Posterior vena cava (tissue), 2 donors: ENCODE measurements at regions of chr11 and their contacts with region 1.

Region 1: DNA sequence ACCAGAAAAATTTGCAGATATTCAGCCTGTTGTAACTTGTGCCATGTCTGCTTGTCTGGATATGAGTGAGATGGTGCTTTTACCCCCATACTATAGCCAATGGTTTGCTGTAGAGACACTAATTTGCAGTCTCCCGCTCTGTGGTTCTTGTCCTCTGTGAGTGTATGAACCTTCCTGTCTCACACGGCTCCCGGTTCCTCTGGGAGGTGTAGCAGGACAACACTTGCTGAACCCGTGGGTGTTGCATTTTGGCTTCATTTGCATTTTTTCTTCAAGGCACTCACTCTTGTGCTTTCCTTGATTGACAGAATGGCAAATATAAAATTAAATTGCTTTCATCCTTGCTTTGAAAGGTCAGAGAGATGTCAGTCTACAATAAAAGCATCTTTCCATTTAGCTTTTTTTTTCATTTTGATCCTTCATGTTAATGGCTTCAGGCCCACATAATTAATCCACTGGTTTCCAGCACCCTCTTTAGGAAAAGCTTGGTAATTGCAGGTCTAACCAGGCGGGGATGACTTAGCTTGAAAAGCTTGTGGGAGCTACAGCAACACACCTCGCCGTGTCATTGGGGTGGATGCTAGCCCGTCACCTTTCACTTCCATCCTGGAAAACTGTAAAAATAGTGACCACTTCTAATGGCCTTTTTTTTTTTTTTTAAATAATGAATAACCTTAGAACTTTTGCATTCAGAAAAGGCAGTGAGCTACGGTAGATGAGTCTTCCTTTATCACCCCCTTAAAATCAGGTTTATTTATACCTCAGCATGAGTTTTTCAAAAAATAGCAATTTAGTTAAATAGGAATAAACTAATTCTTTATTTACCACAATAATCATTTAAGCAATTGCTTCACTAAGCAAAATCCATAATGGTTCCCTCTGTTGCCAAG is 27.4 kb upstream of the ST14 start:
- DNase-seq: no peak

Region 2: DNA sequence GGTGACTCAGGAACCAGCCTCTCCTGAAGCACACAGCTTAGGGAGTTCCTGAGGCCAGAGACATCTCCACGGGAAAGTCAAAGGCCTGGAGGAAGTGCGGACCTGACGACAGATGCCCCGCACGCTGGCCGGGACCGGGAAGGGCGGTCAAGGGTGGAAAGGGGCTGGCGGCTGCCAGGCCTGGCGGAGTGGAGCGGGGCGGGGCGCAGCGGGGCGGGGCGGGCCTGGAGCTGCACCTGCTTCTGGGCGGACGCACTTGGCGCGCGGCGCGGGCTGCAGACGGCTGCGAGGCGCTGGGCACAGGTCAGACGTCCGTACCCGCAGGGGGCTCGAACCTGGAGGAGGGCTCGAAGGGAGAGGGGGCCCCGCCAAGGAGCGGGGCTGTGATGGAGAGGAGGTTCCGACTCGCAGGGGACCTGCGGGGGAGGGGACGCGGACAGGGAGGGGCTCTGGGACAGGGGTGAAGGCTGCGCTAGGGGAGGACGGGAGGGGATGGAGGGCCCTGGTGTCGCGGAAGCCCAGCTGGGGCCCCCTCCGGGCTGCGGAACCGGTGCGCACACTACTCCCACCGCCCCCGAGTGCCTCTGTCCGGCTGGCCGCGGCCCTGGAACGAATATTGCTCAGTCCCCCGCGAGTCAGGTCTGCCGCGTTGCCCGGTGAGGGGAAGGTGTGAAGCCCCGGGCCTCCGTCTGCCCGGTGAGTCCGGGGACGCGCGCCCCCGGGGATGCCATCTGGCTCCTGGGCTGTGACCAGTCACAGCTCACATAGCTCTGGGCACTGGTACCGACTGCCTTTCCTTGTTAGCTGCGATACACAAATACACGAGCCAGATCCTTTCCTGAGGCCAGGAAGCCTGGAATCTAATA is 316.4 kb before region 1 on chr11 and contains the start of gene TMEM45B:
- intact Hi-C with region 1: no loop called
- DNase-seq: no peak
- total RNA-seq, gene TMEM45B: not detected

Region 3: GRCh38 chr11:129922674-129923073 is 209.5 kb before region 1 on chr11:
- intact Hi-C with region 1: loop called (anchors 5 kb)
- DNase-seq: no peak

Region 4: DNA sequence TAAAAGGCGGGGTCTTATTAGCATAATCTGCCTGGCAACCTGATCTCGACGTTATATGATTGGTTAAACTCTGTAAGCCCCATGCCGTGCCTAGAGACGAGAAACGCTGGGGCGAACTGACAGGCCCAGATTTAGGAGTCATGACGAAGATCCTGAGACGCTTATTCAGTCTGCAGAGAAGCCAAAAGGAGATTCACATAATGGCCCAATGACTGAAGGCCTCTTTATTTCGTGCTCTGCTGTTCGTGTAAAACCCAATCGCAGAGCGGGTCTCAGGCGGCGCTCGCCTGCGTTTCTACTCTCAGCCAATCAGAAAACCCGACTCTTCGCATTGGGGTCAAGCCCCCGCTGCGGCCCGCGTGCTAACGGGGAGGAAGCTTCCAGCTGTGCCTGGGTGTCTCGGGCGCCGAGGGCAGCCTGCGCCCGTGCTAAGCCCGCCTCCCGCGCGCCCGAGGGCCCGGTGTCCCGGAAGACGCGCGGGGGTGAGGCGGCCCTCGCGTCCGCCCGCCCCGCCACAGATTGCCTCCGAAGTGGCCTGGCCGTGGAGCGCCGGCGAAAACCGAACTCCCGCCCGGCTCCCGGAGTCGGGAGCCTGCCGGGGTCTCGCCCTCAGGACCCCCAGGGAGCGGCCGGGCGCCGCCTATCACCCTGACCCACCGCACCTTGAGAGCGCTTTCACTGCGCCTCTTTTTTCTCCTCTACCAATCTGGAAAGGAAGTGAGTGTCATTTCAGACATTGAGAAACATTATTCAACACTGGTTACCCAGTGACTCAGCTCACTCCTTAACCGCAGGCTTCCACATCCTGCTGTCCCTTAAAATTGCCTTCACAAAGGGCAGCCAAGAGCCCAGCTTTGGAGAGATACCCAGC is 129.1 kb before region 1 on chr11:
- intact Hi-C with region 1: loop called in 1 of 2 experiments (anchors 5 kb)
- DNase-seq: peak; percentile 98

Region 5: GRCh38 chr11:130069684-130070108 is 62.5 kb before region 1 on chr11 and contains the start of gene APLP2:
- intact Hi-C with region 1: loop called in 1 of 2 experiments (anchors 5 kb)
- DNase-seq: peak; percentile 99
- total RNA-seq, gene APLP2: 284 to 350 TPM